GM10248 (cell line): ENCODE measurements at regions of chr14 and their contacts with region 1.

Region 1: DNA sequence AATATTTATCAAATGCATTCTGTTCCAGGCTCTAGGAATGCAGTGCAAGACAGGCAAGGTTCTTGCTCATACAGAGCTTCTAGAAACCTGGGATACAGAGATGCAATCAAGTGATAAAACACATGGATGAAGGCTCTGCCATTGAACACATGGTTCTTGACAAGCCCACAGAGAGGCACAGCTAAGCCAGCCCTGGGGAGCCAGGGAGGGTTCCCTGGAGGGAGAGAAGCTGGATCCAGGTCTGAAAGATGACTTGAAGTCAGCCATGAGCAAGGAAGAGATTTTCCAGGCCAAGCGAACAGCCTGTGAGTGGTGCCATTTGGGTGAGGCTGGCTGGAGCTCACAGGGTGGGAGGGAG is 66.2 kb downstream of the IRF2BPL start:
- DNase-seq: no peak
- CTCF ChIP-seq: no peak

Region 2: DNA sequence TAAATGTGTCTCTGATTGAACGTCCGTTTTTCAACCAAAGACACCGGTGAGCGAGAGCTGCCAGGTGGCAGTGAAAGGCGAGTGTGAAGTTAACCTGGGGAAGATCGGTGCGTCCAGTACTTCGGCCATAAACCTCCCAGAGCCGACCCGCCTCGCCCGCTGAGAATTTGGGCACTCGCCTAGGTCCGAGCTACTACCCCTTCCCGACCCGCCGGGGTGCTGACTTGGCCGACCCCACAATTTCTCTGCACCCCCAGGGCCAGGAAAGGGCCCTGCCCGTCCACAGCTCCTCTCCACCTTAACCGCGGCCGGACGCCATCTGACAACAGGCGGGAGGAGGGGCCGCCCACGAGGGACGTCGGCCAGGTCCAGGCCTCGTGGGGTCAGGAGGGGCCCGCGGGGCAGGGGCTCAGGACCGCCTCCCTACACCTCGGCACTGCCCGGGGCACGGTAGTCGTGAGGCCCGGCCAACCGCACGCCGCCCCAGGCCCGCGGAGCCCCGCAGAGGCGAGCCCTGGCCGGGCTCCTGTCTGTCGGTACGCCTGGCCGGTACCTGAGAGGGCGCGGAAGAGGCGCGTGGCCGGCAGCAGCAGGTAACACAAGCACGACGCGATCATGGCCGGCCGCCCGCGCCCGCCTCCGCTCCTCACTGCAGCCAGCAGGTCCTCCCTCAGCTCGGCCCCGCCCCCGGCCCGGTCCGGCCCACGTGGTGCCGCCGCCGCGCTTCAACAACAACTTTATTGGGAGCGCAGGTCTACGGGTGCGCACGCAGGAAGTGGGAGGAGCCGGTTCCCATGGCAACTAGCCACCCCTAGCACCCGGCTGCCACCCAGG is 149.9 kb before region 1 on chr14 and contains the start of gene ANGEL1:
- CTCF ChIA-PET with region 1: no interaction called
- POLR2A ChIA-PET with region 1: no interaction called
- DNase-seq: peak; percentile 93
- CTCF ChIP-seq: no peak

Region 3: GRCh38 chr14:76848890-76849289 is 113.4 kb before region 1 on chr14:
- CTCF ChIA-PET with region 1: no interaction called
- POLR2A ChIA-PET with region 1: no interaction called
- DNase-seq: no peak
- CTCF ChIP-seq: no peak

Region 4: DNA sequence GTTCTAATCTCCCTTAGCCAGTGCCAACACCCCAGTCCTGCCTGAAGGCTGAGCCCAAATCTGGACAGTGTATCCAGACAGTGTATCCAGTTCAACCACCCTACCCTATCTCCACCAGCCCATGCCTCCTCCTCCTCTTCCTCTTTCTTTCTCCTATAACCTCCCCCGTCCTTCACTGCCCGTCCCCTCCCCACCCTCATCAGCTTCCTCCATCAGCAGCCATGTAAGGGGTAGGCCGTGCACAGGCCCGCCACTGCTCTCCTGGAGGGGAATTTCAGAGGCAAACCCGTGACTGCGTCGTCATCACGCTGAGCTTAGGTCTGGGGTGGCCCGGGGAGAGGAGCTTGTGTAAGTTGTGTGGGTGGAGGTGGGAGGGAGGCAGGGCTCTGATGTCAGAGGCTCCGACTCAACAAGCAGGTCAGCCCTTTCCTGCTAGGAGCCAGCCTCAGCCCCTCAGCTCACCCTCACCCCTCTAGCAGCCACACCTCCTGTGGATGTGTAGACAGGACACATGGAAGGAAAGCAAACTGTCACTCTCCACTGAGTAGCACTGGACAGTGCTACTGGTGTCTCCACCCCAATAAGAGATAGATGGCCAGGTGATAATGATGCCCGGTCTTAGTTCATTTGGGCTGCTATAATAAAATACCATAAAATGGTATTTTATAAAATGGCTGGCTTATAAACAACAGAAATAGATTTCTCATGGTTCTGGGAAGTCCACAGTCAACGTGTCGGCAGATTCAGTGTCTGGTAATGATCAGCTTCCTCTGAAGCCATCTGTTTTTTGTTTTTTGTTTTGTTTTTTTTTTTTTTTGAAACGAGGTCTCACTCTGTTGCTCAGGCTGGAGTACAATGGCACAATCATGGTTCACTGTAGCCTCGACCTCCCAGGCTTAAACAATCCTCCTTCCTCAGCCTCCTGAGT is 15.8 kb after region 1 on chr14:
- CTCF ChIA-PET with region 1: interaction called, 12 read pairs
- POLR2A ChIA-PET with region 1: interaction called, 24 read pairs
- DNase-seq: peak; percentile 91
- CTCF ChIP-seq: no peak